ENCODE measurements at regions of chr10 and their contacts with region 1.

Region 1: GRCh38 chr10:93702211-93703001 is at the start of gene FRA10AC1:
- DNase-seq: peak; percentile 87
- H3K4me3 Mint-ChIP-seq: no peak within 1 kb of the TSS
- H3K27ac Mint-ChIP-seq: no peak within 1 kb of the TSS
- H3K4me1 Mint-ChIP-seq: peaks cover 16% of the 10 kb centered on the region
- H3K27me3 Mint-ChIP-seq: no peaks in the 10 kb centered on the region
- total RNA-seq, gene FRA10AC1: 18.6 and 20.7 TPM in 2 replicates

Region 2: DNA sequence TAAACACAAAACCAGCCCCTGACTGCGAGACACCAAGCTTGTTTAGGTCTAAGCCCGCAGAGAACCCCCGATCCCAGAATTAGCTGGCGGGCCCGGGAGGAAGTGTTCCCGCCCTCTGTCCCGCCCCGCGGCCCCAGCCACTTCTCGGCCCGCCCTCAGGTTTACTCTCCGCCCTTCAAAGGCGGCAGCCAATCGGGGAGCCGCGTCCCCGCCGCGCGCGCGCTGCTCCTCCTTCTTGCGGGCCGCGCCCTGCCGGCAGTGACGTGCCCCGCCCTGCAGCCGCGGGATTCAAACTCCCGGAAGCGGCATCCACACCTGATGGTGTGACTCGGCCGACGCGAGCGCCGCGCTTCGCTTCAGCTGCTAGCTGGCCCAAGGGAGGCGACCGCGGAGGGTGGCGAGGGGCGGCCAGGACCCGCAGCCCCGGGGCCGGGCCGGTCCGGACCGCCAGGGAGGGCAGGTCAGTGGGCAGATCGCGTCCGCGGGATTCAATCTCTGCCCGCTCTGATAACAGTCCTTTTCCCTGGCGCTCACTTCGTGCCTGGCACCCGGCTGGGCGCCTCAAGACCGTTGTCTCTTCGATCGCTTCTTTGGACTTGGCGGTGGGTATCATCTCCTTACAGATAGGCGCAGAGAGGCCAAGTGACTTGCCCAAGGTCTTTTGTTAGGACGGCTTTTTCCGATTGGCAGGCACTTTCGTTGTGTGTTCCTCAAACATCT is 205.9 kb before region 1 on chr10 and contains the start of gene CEP55:
- intact Hi-C with region 1: loop called (anchors 1 kb)
- DNase-seq: peak; percentile 95
- H3K4me3 Mint-ChIP-seq: peak within 1 kb of the TSS; percentile 97
- H3K27ac Mint-ChIP-seq: peak within 1 kb of the TSS; percentile 96
- H3K4me1 Mint-ChIP-seq: peaks cover 54% of the 10 kb centered on the region
- H3K27me3 Mint-ChIP-seq: no peaks in the 10 kb centered on the region
- total RNA-seq, gene CEP55: 72.6 and 76.1 TPM in 2 replicates

Region 3: GRCh38 chr10:93893646-93894515 is 191.5 kb after region 1 on chr10 and contains the start of gene SLC35G1:
- intact Hi-C with region 1: loop called (anchors 2 kb)
- DNase-seq: peak; percentile 56
- H3K4me3 Mint-ChIP-seq: peak within 1 kb of the TSS; percentile 80
- H3K27ac Mint-ChIP-seq: peak within 1 kb of the TSS; percentile 58
- H3K4me1 Mint-ChIP-seq: peaks cover 34% of the 10 kb centered on the region
- H3K27me3 Mint-ChIP-seq: peaks cover 11% of the 10 kb centered on the region
- total RNA-seq, gene SLC35G1: 5.9 and 6.0 TPM in 2 replicates

Region 4: DNA sequence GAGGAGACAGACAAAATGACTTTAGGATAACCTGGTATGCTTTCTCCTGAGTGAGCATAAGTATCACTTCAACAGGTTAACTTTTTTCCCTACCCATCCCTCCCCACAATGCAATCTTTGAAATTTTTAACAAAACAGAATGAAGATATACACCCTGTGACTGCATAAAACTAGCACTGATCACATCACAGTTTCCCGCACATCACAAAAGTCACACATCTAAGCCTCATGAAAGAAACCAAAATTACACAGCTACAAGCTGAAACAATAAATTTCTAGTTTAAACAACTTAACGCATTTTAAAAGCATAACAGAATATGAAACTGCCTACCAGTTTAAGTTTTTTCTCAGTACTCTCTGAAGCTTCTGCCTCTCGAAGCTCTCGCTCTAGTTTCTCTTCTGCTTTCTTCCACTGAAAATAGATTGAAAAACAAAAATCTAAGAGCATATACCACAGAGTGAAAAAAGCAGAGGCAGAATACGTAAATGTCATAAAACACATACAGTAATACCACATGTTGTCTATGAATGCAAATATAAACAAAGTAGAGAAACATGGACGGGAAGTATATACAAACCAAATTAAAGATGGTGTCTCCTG is 642.2 kb after region 1 on chr10:
- intact Hi-C with region 1: no loop called
- DNase-seq: no peak
- H3K4me3 Mint-ChIP-seq: no peak overlapping the region
- H3K27ac Mint-ChIP-seq: no peak overlapping the region
- H3K4me1 Mint-ChIP-seq: peaks cover 7% of the 10 kb centered on the region
- H3K27me3 Mint-ChIP-seq: no peaks in the 10 kb centered on the region

Region 5: DNA sequence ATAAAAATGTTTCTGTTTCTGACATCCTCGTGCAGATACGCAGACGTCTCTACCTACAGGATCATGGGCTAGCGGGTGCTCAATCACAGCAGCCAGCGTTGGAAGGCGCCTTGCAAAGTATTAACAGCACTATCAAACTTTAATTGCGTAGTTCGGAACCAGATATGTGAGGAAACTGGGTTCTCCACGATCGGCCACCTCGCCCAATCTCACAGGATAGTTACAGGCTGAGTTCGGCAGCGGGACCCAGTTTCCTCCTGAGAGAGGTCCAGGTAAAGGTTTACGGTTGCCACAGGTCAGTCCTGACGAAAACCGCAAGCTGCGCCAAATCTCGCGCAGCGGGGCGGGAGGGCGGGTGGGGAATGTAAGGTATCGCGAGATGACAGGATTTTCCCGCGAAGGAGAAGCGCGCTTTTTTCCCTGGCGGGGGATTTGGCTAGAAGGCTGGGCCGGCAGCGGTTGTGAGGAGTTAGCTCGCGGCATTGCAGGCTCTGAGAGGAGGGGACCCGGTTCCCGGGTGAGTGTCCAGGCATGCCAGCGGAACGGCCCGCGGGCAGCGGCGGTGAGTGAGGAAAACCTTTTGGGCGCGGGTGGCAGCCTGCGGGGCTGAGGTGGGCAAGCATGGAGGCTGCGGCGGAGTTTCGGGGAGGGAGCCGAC is 843.1 kb after region 1 on chr10 and contains the start of gene HELLS:
- intact Hi-C with region 1: loop called (anchors 10 kb)
- DNase-seq: peak; percentile 76
- H3K4me3 Mint-ChIP-seq: peak within 1 kb of the TSS; percentile 99
- H3K27ac Mint-ChIP-seq: peak within 1 kb of the TSS; percentile 98
- H3K4me1 Mint-ChIP-seq: peaks cover 35% of the 10 kb centered on the region
- H3K27me3 Mint-ChIP-seq: peaks cover 5% of the 10 kb centered on the region
- total RNA-seq, gene HELLS: 224 and 230 TPM in 2 replicates

Measured in activated T-helper 2 cell treated with anti-CD3 and anti-CD28 coated beads, Interferon-gamma antibody, Interleukin-2, Interleukin-4, amounts not matched to agents 10 μg/mL and 5 μg/mL and 100 μg/mL, durations not matched to agents 14 hours and 24 hours and 36 hours (primary cell).